MCF 10A (cell line): ENCODE measurements at regions of chr11 and their contacts with region 1.

Region 1: DNA sequence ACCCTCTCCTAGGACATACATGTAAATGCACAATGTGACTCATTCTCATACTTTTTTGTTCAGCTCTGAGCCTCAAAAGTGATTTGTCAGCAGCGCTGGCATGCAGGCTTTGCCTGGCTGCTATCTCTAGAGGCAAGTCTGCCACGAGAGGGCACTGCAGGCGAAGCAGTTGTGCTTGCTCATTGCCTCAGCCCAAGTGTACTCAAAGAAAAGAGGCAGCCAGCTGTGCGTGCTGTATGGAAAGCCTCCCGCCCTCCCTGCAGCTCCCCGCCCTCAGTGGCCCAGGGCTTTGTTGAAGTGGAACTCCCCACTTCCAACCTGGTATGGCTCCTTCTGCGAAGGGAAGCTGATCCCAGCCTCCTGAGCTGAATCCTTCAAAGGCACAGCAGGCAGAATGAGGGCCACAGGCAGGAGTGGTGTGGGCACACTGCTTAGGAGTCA is 16.3 kb downstream of the SDHAF2 start:
- DNase-seq: peak; percentile 91
- H3K4me3 Mint-ChIP-seq: no peak overlapping the region
- H3K27ac Mint-ChIP-seq: no peak overlapping the region
- H3K4me1 Mint-ChIP-seq: no peaks in the 10 kb centered on the region
- H3K27me3 Mint-ChIP-seq: no peaks in the 10 kb centered on the region
- CTCF ChIP-seq: peak; percentile 79

Region 2: DNA sequence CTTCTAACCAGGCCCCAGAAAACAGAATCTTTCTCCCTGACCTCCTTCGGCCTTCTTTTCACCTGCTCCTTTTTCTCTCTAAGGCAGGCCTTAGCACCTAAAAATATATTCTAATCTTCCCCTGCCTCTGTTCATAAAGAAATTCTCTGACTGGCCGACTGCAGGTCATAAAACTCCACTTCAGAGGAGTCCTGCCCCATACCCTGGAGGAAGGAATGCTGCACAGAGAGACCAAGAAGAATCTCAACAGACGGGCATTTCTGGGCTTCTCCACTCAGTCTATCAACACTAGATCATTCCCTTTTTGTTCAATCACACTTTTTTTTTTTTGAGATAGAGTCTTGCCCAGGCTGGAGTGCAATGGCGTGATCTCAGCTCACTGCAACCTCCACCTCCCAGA is 262.6 kb before region 1 on chr11:
- CTCF ChIA-PET with region 1: no interaction called
- POLR2A ChIA-PET with region 1: no interaction called
- intact Hi-C with region 1: no loop called
- DNase-seq: no peak
- H3K4me3 Mint-ChIP-seq: no peak overlapping the region
- H3K27ac Mint-ChIP-seq: no peak overlapping the region
- H3K4me1 Mint-ChIP-seq: no peaks in the 10 kb centered on the region
- H3K27me3 Mint-ChIP-seq: peaks cover 12% of the 10 kb centered on the region
- CTCF ChIP-seq: no peak

Region 3: GRCh38 chr11:61429691-61430582 is 16.3 kb before region 1 on chr11 and contains the starts of genes CPSF7 and SDHAF2:
- CTCF ChIA-PET with region 1: interaction called, 86 read pairs
- POLR2A ChIA-PET with region 1: interaction called, 24 read pairs
- intact Hi-C with region 1: no loop called
- DNase-seq: peak; percentile 93
- H3K4me3 Mint-ChIP-seq: peak within 1 kb of the TSS; percentile 98
- H3K27ac Mint-ChIP-seq: peak within 1 kb of the TSS; percentile 99
- H3K4me1 Mint-ChIP-seq: no peaks in the 10 kb centered on the region
- H3K27me3 Mint-ChIP-seq: no peaks in the 10 kb centered on the region
- CTCF ChIP-seq: no peak
- total RNA-seq, gene CPSF7: 99.9 and 111 TPM in 2 replicates
- total RNA-seq, gene SDHAF2: 30.1 and 34.6 TPM in 2 replicates

Region 4: DNA sequence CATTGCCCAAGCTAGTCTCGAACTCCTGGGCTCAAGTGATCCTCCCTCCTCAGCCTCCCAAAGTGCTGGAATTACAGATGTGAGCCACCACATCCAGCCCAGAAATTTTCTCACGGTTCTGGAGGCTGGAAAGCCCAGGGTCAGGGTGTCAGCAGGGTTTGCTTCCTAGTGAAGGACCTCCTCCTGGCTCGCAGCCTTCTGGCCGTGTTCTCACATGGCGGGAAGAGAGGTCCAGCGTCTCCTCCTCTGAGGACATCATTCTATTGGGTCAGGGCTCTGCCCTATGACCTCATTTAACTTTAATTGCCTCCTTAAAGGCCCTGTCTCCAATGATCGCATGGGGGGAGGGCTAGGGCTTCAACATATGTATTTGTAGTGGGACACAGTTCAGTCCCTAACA is 21.8 kb after region 1 on chr11:
- CTCF ChIA-PET with region 1: interaction called, 10 read pairs
- POLR2A ChIA-PET with region 1: no interaction called
- intact Hi-C with region 1: no loop called
- DNase-seq: no peak
- H3K4me3 Mint-ChIP-seq: no peak overlapping the region
- H3K27ac Mint-ChIP-seq: no peak overlapping the region
- H3K4me1 Mint-ChIP-seq: no peaks in the 10 kb centered on the region
- H3K27me3 Mint-ChIP-seq: no peaks in the 10 kb centered on the region
- CTCF ChIP-seq: no peak

Region 5: GRCh38 chr11:61495801-61496597 is 49.8 kb after region 1 on chr11:
- CTCF ChIA-PET with region 1: interaction called, 12 read pairs
- POLR2A ChIA-PET with region 1: no interaction called
- intact Hi-C with region 1: no loop called
- DNase-seq: no peak
- H3K4me3 Mint-ChIP-seq: no peak overlapping the region
- H3K27ac Mint-ChIP-seq: no peak overlapping the region
- H3K4me1 Mint-ChIP-seq: no peaks in the 10 kb centered on the region
- H3K27me3 Mint-ChIP-seq: no peaks in the 10 kb centered on the region
- CTCF ChIP-seq: no peak

Region 6: GRCh38 chr11:61522884-61523283 is 76.7 kb after region 1 on chr11:
- CTCF ChIA-PET with region 1: interaction called, 49 read pairs
- POLR2A ChIA-PET with region 1: no interaction called
- intact Hi-C with region 1: no loop called
- DNase-seq: no peak
- H3K4me3 Mint-ChIP-seq: no peak overlapping the region
- H3K27ac Mint-ChIP-seq: no peak overlapping the region
- H3K4me1 Mint-ChIP-seq: no peaks in the 10 kb centered on the region
- H3K27me3 Mint-ChIP-seq: no peaks in the 10 kb centered on the region
- CTCF ChIP-seq: no peak

Region 7: GRCh38 chr11:61627567-61628445 is 181.6 kb after region 1 on chr11:
- CTCF ChIA-PET with region 1: interaction called, 161 read pairs
- POLR2A ChIA-PET with region 1: interaction called, 5 read pairs
- intact Hi-C with region 1: loop called (anchors 1 kb)
- DNase-seq: peak; percentile 75
- H3K4me3 Mint-ChIP-seq: no peak overlapping the region
- H3K27ac Mint-ChIP-seq: peak overlapping the region; percentile 54
- H3K4me1 Mint-ChIP-seq: peaks cover 12% of the 10 kb centered on the region
- H3K27me3 Mint-ChIP-seq: no peaks in the 10 kb centered on the region
- CTCF ChIP-seq: peak; percentile 94